ENCODE measurements at regions of chr7 and their contacts with region 1.

Region 1: DNA sequence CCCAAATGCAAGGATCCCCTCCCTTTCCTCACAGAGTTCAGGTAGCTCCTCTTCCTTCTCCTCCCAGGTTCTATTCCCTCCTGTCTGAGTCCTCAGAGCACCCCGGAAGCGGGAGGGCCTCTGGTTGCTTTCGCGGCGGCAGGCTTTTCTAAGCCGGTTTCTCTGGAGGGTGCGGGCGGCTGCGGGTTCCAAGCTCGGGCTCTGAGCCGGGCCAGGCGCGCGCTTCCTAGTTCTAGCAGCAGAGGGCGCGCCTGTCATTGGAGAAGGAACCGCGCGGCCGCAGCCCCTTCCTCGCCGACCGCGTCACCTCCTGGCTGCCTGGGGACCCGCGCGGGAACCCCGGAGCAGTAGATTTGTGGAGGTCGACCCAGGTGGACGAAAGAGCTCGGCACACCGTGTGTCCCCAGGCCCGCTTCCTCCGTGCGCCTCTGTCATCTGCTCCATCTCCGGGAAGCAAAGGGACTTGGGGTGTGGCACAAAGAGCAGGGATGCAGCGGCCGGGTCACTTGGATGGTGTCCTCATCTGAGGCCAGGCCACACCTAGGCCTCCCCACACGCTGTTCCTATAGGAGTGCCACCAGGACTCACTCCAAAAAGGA is 389.0 kb upstream of the PODXL start:
- DNase-seq: peak; percentile 93
- H3K4me3 ChIP-seq: peak overlapping the region; percentile 23 to 37
- H3K27ac ChIP-seq: peak overlapping the region in 1 of 2 experiments; percentile 31; a peak in 1 of 4 replicates
- H3K4me1 ChIP-seq: peaks cover 13 to 31% of the 10 kb centered on the region in 2 experiments; a peak in 3 of 4 replicates
- H3K27me3 ChIP-seq: no peaks in the 10 kb centered on the region
- CTCF ChIP-seq: peak; percentile 97
- EP300 ChIP-seq: no peak; a peak in 1 of 4 replicates
- RAD21 ChIP-seq: peak; percentile 95

Region 2: GRCh38 chr7:131521651-131522163 is 423.7 kb before region 1 on chr7:
- CTCF ChIA-PET with region 1: no interaction called
- POLR2A ChIA-PET with region 1: no interaction called
- DNase-seq: no peak
- H3K4me3 ChIP-seq: no peak overlapping the region
- H3K27ac ChIP-seq: peak overlapping the region in 1 of 2 experiments; percentile 22; a peak in 2 of 4 replicates
- H3K4me1 ChIP-seq: peaks cover 0 to 2% of the 10 kb centered on the region in 2 experiments; a peak in 1 of 4 replicates
- H3K27me3 ChIP-seq: no peaks in the 10 kb centered on the region
- CTCF ChIP-seq: no peak
- EP300 ChIP-seq: no peak
- RAD21 ChIP-seq: no peak

Region 3: GRCh38 chr7:131919920-131920709 is 25.3 kb before region 1 on chr7:
- CTCF ChIA-PET with region 1: interaction called, 19 read pairs
- POLR2A ChIA-PET with region 1: no interaction called
- DNase-seq: no peak
- H3K4me3 ChIP-seq: no peak overlapping the region
- H3K27ac ChIP-seq: peak overlapping the region in 1 of 2 experiments; percentile 54; a peak in 2 of 4 replicates
- H3K4me1 ChIP-seq: peaks cover 5 to 6% of the 10 kb centered on the region in 2 experiments; a peak in 3 of 4 replicates
- H3K27me3 ChIP-seq: no peaks in the 10 kb centered on the region
- CTCF ChIP-seq: no peak
- EP300 ChIP-seq: no peak
- RAD21 ChIP-seq: no peak

Region 4: GRCh38 chr7:132045481-132045980 is 100.1 kb after region 1 on chr7:
- CTCF ChIA-PET with region 1: interaction called, 11 read pairs
- POLR2A ChIA-PET with region 1: no interaction called
- DNase-seq: no peak
- H3K4me3 ChIP-seq: no peak overlapping the region
- H3K27ac ChIP-seq: no peak overlapping the region
- H3K4me1 ChIP-seq: peaks cover 0 to 8% of the 10 kb centered on the region in 2 experiments; a peak in 1 of 4 replicates
- H3K27me3 ChIP-seq: no peaks in the 10 kb centered on the region
- CTCF ChIP-seq: no peak
- EP300 ChIP-seq: no peak
- RAD21 ChIP-seq: no peak

Region 5: DNA sequence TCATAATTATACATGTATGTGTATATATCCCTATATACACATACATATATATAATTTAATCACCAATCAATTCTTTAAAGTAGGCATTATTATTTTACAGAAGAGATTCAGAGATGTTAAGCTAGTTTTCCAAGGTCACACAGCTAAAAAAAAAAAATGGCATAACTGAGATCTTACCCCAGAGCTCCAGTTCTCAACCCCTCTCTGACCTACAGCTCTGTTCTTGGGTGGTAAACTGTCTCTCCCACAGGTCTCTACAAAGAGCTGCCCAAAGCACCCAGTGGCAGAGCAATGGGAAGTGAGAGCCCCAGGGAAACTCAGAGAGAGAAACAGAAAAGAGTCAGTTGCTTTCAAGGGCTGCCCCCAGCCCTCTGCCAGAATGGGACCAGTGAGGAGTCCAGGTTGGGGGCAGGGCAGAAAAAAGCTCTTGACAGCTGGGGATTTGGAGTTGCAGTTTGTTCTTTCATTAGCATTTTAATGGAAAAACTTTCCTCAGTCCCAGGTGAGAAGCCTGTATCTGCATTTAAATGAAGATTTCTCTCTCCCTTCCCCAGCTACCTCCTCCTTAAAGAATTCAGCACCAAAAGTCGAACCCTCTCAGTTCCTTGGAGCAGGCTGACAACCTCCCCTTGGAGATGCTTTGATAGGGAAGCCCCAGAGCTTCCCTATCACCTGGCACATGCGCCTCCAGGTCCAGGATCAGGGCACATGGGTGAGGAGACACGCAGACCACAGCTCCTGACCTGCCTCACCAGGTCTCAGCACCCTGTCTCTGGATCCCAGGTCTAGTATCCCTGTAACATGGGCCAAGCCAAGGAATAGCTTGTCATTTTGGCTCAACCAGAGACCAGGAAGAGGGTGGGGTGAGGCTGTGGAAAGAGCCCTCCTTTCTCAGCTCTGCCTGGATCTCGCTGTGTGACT is 242.7 kb after region 1 on chr7:
- CTCF ChIA-PET with region 1: interaction called, 13 read pairs
- POLR2A ChIA-PET with region 1: no interaction called
- DNase-seq: no peak
- H3K4me3 ChIP-seq: no peak overlapping the region
- H3K27ac ChIP-seq: no peak overlapping the region
- H3K4me1 ChIP-seq: peaks cover 0 to 3% of the 10 kb centered on the region in 2 experiments; a peak in 1 of 4 replicates
- H3K27me3 ChIP-seq: no peaks in the 10 kb centered on the region
- CTCF ChIP-seq: no peak
- EP300 ChIP-seq: no peak
- RAD21 ChIP-seq: no peak

Region 6: DNA sequence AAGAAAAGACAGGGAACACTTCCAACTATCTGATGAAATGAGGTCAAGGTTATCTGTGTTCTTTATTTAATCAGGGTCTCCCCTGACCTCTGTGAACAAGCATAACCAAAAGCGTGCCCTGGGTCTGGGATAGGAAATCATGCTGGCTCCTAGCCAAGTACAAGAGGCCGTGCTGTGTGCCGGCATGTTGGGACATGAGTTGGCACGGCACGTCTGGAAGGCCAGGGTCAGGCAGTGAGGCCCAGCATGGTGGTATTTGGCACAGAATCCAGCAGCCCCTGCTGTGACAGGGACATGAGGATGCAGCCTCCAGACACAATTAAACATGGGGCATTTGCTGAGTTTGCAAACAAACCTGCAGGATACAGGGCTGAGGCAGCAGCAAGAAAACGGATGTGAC is 310.5 kb after region 1 on chr7:
- CTCF ChIA-PET with region 1: interaction called, 39 read pairs
- POLR2A ChIA-PET with region 1: no interaction called
- DNase-seq: peak; percentile 63
- H3K4me3 ChIP-seq: no peak overlapping the region
- H3K27ac ChIP-seq: no peak overlapping the region; a peak in 1 of 4 replicates
- H3K4me1 ChIP-seq: peaks cover 0 to 22% of the 10 kb centered on the region in 2 experiments; a peak in 1 of 4 replicates
- H3K27me3 ChIP-seq: no peaks in the 10 kb centered on the region
- CTCF ChIP-seq: no peak
- EP300 ChIP-seq: peak in 1 of 2 experiments; percentile 37; a peak in 1 of 4 replicates
- RAD21 ChIP-seq: no peak

Region 7: GRCh38 chr7:132580717-132581285 is 635.4 kb after region 1 on chr7:
- CTCF ChIA-PET with region 1: interaction called, 136 read pairs
- POLR2A ChIA-PET with region 1: interaction called, 4 read pairs
- DNase-seq: peak; percentile 84
- H3K4me3 ChIP-seq: no peak overlapping the region
- H3K27ac ChIP-seq: no peak overlapping the region
- H3K4me1 ChIP-seq: peaks cover 0 to 17% of the 10 kb centered on the region in 2 experiments; a peak in 2 of 4 replicates
- H3K27me3 ChIP-seq: peaks cover 13% of the 10 kb centered on the region; the same call in 1 of the 2 replicates
- CTCF ChIP-seq: peak; percentile 96
- EP300 ChIP-seq: 0 out of 4 replicates have a peak, but pooled peaks of 1 of the 2 experiments have one; percentile 23
- RAD21 ChIP-seq: peak; percentile 98